GM12878 (cell line): ENCODE measurements at regions of chr2 and their contacts with region 1.

Region 1: GRCh38 chr2:122395687-122396086 is 640.2 kb downstream of the TSN start:
- DNase-seq: no peak
- ATAC-seq: no peak
- H3K4me3 ChIP-seq: no peak overlapping the region
- H3K27ac ChIP-seq: no peak overlapping the region
- H3K4me1 ChIP-seq: no peaks in the 10 kb centered on the region
- H3K27me3 ChIP-seq: no peaks in the 10 kb centered on the region
- CTCF ChIP-seq: no peak
- EP300 ChIP-seq: no peak
- POLR2A ChIP-seq: no peak
- RAD21 ChIP-seq: no peak

Region 2: DNA sequence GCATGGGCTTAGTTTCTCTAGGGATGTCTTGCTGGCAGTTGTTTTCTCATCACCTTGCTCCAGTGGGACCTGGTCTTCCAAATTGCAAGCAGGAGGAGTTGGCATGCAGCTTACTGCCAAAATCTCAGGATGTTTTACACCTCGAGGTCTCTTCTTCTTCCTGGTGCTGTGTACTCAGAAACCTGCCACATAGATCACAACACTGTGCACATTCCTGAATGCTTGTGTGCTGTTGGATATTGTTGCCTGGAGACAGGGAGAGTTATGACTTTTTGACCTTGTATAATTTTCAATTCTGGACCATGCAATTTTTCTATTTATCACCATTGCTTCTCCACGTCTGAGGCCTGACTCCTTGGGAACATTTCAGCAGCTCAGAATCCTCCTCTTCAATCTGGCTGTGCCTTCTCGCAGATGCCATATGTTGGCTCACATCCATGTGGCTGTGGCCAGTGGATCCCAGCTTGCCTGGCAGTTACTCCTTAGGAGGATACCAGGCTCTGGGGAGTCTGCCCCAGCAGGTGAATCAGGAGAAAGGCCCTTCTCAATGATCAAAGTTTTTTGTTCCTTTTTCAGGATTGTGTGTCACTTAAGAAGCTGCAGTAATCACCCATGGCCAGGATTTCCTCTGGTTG is 151.0 kb before region 1 on chr2:
- CTCF ChIA-PET with region 1: no interaction called
- POLR2A ChIA-PET with region 1: no interaction called
- RAD21 ChIA-PET with region 1: no interaction called
- SMC1A ChIA-PET with region 1: no interaction called
- in situ Hi-C with region 1: no loop called
- intact Hi-C with region 1: no loop called
- DNase-seq: no peak
- ATAC-seq: no peak
- H3K4me3 ChIP-seq: no peak overlapping the region
- H3K27ac ChIP-seq: no peak overlapping the region
- H3K4me1 ChIP-seq: no peaks in the 10 kb centered on the region
- H3K27me3 ChIP-seq: no peaks in the 10 kb centered on the region; a peak in 1 of 4 replicates
- CTCF ChIP-seq: no peak
- EP300 ChIP-seq: no peak
- POLR2A ChIP-seq: no peak
- RAD21 ChIP-seq: no peak

Region 3: DNA sequence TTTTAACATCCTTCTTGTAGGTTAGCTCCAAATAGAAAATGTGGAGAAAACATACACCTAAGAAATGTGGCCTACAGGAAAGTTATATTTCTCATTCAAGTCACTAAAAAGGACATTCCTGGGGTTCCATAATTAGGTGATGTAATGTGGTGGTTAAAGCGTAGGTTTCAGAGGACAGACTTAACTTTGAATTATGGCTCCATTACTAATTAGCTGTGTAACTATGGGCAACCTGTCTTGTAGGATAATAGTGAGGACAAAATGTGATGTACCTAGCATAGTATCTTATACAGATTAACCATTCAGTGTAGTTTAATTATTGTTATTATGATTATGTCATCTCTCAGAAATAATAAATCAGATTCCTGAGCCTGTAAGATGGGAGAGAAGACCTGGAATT is 37.7 kb before region 1 on chr2:
- CTCF ChIA-PET with region 1: no interaction called
- POLR2A ChIA-PET with region 1: no interaction called
- RAD21 ChIA-PET with region 1: no interaction called
- SMC1A ChIA-PET with region 1: interaction called, 6 read pairs
- in situ Hi-C with region 1: loop called (anchors 5 kb)
- intact Hi-C with region 1: no loop called
- DNase-seq: no peak
- ATAC-seq: no peak
- H3K4me3 ChIP-seq: no peak overlapping the region
- H3K27ac ChIP-seq: no peak overlapping the region
- H3K4me1 ChIP-seq: no peaks in the 10 kb centered on the region
- H3K27me3 ChIP-seq: no peaks in the 10 kb centered on the region
- CTCF ChIP-seq: no peak
- EP300 ChIP-seq: no peak
- POLR2A ChIP-seq: no peak
- RAD21 ChIP-seq: no peak

Region 4: DNA sequence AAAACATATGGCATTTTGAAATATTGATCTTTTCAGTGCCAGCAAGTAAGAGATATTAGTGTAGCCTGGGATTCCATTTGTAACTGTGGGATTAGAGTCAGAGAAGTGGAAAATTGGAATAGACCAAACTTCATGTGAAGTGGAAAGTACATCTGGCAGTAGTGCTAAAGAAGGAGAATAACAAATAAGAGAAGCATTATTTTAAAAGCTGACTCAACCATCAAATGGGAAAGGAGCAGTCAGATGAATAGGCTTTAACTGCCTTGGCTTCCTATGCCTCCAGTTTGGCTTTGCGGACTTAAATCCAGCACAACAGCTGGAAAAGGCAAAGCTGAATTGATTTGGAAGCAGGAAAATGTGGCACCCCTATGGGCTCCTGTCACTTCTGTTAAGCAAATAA is 17.2 kb before region 1 on chr2:
- CTCF ChIA-PET with region 1: no interaction called
- POLR2A ChIA-PET with region 1: no interaction called
- RAD21 ChIA-PET with region 1: no interaction called
- SMC1A ChIA-PET with region 1: no interaction called
- in situ Hi-C with region 1: no loop called
- intact Hi-C with region 1: no loop called
- DNase-seq: no peak
- ATAC-seq: no peak
- H3K4me3 ChIP-seq: no peak overlapping the region
- H3K27ac ChIP-seq: no peak overlapping the region
- H3K4me1 ChIP-seq: no peaks in the 10 kb centered on the region
- H3K27me3 ChIP-seq: no peaks in the 10 kb centered on the region
- CTCF ChIP-seq: no peak
- EP300 ChIP-seq: no peak
- POLR2A ChIP-seq: no peak
- RAD21 ChIP-seq: no peak

Region 5: DNA sequence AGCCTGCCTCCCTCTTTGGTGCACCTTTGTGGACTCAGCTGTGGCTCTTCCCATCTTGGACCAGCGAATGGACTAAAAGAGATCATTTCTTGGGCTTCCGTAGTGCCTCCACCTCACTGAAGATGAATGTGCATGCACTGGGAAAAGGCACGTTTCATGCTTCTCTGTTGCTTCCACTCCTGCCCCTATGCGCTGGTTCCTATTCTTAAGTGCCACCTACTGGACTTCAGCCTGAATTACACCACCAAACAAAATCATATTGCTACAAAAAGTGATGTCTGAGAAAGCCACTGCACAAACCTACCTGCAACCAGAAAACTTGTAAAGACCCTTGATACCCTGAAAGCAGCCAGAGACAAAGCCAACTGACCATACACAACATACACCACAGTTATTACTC is 55.4 kb after region 1 on chr2:
- CTCF ChIA-PET with region 1: no interaction called
- POLR2A ChIA-PET with region 1: no interaction called
- RAD21 ChIA-PET with region 1: no interaction called
- SMC1A ChIA-PET with region 1: no interaction called
- in situ Hi-C with region 1: no loop called
- intact Hi-C with region 1: no loop called
- DNase-seq: no peak
- ATAC-seq: no peak
- H3K4me3 ChIP-seq: no peak overlapping the region
- H3K27ac ChIP-seq: no peak overlapping the region
- H3K4me1 ChIP-seq: no peaks in the 10 kb centered on the region
- H3K27me3 ChIP-seq: no peaks in the 10 kb centered on the region
- CTCF ChIP-seq: peak; percentile 10 to 46 (median 26); a peak in 2 of 6 replicates
- EP300 ChIP-seq: no peak
- POLR2A ChIP-seq: no peak
- RAD21 ChIP-seq: peak; percentile 61

Region 6: GRCh38 chr2:122692400-122693083 is 296.9 kb after region 1 on chr2:
- CTCF ChIA-PET with region 1: no interaction called
- POLR2A ChIA-PET with region 1: no interaction called
- RAD21 ChIA-PET with region 1: no interaction called
- SMC1A ChIA-PET with region 1: no interaction called
- in situ Hi-C with region 1: no loop called
- intact Hi-C with region 1: no loop called
- DNase-seq: no peak
- ATAC-seq: no peak
- H3K4me3 ChIP-seq: no peak overlapping the region
- H3K27ac ChIP-seq: no peak overlapping the region
- H3K4me1 ChIP-seq: no peaks in the 10 kb centered on the region
- H3K27me3 ChIP-seq: no peaks in the 10 kb centered on the region
- CTCF ChIP-seq: no peak
- EP300 ChIP-seq: no peak
- POLR2A ChIP-seq: no peak
- RAD21 ChIP-seq: no peak